IMR-90 (cell line): ENCODE measurements at regions of chr20 and their contacts with region 1.

Region 1: DNA sequence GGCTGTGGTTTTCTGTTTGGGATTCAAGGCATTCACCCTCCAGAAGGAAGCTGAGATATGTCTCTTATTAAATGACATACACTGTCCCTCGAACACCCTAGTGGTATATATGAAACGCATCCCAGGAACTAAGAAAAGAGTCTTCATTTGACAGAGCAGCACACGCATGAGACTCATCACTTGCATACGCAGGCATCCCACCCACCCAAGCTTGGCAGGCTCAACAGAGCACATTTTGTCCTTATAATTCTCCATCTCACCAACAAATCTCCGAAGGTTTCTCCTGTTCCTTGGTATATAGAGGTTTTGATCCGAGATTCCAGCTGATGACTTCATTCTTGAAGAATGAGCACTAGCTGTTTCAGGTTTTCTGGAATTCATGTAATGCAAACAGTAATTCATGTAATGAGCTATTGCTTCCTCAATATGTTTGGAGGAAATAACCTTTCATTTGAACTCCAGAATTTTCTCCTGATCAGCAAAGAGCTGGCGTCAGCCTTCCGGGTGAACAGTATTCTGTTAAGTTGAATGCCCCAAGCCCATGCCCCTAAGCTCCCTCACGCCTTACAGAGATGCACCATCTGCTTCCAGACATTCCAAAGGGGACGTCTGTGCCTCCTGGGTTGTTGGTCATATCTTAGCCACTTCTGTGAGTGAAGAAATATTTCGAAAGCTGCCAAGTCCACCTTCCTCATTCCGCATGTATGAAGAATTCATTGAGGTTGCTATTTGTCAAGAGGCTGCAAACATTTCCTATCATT is 66.0 kb upstream of the CDH4 start:
- DNase-seq: peak; percentile 98
- ATAC-seq: peak; percentile 88
- H3K4me3 ChIP-seq: no peak overlapping the region
- H3K27ac ChIP-seq: peak overlapping the region; percentile 86
- H3K4me1 ChIP-seq: peaks cover 4% of the 10 kb centered on the region; the same call in 1 of the 2 replicates
- H3K27me3 ChIP-seq: no peaks in the 10 kb centered on the region
- CTCF ChIP-seq: peak; percentile 25; the same call in 1 of the 2 replicates
- POLR2A ChIP-seq: no peak
- RAD21 ChIP-seq: peak; percentile 6; the same call in 1 of the 2 replicates

Region 2: DNA sequence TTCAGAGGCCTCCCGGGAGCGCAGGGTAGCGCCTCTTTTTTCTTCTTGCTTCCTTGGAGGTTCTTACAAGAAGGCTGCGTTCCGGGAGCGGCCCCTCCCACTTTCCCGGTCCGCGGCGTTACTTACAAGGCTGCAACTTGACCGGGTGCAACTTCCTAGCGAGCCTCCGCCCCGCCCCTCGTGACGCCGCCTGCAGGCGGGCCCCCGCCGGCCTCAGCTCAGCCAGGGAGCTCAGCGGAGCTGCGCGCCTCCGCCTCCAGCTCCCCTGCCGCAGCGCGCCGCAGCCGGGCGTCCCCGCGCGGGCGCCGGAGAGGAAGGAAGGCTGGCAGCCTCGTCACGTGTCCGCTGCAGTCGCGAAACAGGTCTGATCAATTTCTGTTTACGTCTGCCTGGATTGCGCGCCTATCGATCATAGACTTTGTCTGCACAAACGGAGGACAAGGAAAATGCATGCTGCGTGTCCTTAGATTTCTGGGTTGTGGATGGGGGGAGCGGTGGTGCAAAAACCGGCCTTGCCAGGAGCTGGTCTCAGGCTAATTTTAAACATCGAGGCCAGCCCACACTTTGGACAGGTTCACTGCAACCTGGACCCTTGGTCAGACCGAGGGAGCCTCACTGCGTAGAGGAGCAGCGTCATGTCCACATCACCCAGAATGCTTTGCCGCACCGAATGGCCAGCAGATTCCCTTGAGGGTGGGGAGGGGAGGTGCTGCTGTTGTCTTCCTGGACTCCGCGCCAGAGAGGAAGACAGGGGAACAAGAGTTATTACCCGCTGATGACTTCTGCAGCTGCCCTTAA is 1245.6 kb before region 1 on chr20 and contains the starts of genes FAM217B and PPP1R3D:
- CTCF ChIA-PET with region 1: no interaction called
- POLR2A ChIA-PET with region 1: no interaction called
- dilution Hi-C with region 1: no loop called
- in situ Hi-C with region 1: no loop called
- intact Hi-C with region 1: loop called (anchors 10 kb)
- DNase-seq: peak; percentile 96
- ATAC-seq: peak; percentile 97
- H3K4me3 ChIP-seq: peak within 1 kb of the TSS; percentile 75
- H3K27ac ChIP-seq: peak within 1 kb of the TSS; percentile 83
- H3K4me1 ChIP-seq: peaks cover 11% of the 10 kb centered on the region
- H3K27me3 ChIP-seq: no peaks in the 10 kb centered on the region
- CTCF ChIP-seq: peak; percentile 12; the same call in 1 of the 2 replicates
- POLR2A ChIP-seq: peak; percentile 63
- RAD21 ChIP-seq: 0 out of 2 replicates have a peak, but pooled peaks have one; percentile 1
- total RNA-seq, gene FAM217B: 3.0 and 3.9 TPM in 2 replicates
- total RNA-seq, gene PPP1R3D: 2.7 and 4.7 TPM in 2 replicates

Region 3: GRCh38 chr20:60238992-60239660 is 946.9 kb before region 1 on chr20:
- CTCF ChIA-PET with region 1: no interaction called
- POLR2A ChIA-PET with region 1: no interaction called
- dilution Hi-C with region 1: no loop called
- in situ Hi-C with region 1: no loop called
- intact Hi-C with region 1: loop called (anchors 10 kb)
- DNase-seq: no peak
- ATAC-seq: no peak
- H3K4me3 ChIP-seq: no peak overlapping the region
- H3K27ac ChIP-seq: no peak overlapping the region
- H3K4me1 ChIP-seq: peaks cover 6% of the 10 kb centered on the region
- H3K27me3 ChIP-seq: no peaks in the 10 kb centered on the region
- CTCF ChIP-seq: no peak
- POLR2A ChIP-seq: no peak
- RAD21 ChIP-seq: no peak

Region 4: GRCh38 chr20:61219021-61219431 is 33.0 kb after region 1 on chr20:
- CTCF ChIA-PET with region 1: no interaction called
- POLR2A ChIA-PET with region 1: interaction called, 3 read pairs
- dilution Hi-C with region 1: no loop called
- in situ Hi-C with region 1: no loop called
- intact Hi-C with region 1: loop called (anchors 1 kb)
- DNase-seq: peak; percentile 60
- ATAC-seq: peak; percentile 70
- H3K4me3 ChIP-seq: no peak overlapping the region
- H3K27ac ChIP-seq: peak overlapping the region; percentile 65
- H3K4me1 ChIP-seq: peaks cover 9% of the 10 kb centered on the region
- H3K27me3 ChIP-seq: peaks cover 10% of the 10 kb centered on the region
- CTCF ChIP-seq: no peak
- POLR2A ChIP-seq: no peak
- RAD21 ChIP-seq: no peak

Region 5: GRCh38 chr20:61253264-61253639 is 67.2 kb after region 1 on chr20:
- CTCF ChIA-PET with region 1: interaction called, 3 read pairs
- POLR2A ChIA-PET with region 1: no interaction called
- dilution Hi-C with region 1: no loop called
- in situ Hi-C with region 1: no loop called
- intact Hi-C with region 1: loop called (anchors 1 kb)
- DNase-seq: peak; percentile 45
- ATAC-seq: peak; percentile 63
- H3K4me3 ChIP-seq: peak overlapping the region; percentile 55
- H3K27ac ChIP-seq: peak overlapping the region; percentile 4; the same call in 1 of the 2 replicates
- H3K4me1 ChIP-seq: peaks cover 6% of the 10 kb centered on the region; the same call in 1 of the 2 replicates
- H3K27me3 ChIP-seq: peaks cover 25% of the 10 kb centered on the region
- CTCF ChIP-seq: peak; percentile 32
- POLR2A ChIP-seq: no peak
- RAD21 ChIP-seq: peak; percentile 29